GM10248 (cell line): ENCODE measurements at regions of chr1 and their contacts with region 1.

Region 1: DNA sequence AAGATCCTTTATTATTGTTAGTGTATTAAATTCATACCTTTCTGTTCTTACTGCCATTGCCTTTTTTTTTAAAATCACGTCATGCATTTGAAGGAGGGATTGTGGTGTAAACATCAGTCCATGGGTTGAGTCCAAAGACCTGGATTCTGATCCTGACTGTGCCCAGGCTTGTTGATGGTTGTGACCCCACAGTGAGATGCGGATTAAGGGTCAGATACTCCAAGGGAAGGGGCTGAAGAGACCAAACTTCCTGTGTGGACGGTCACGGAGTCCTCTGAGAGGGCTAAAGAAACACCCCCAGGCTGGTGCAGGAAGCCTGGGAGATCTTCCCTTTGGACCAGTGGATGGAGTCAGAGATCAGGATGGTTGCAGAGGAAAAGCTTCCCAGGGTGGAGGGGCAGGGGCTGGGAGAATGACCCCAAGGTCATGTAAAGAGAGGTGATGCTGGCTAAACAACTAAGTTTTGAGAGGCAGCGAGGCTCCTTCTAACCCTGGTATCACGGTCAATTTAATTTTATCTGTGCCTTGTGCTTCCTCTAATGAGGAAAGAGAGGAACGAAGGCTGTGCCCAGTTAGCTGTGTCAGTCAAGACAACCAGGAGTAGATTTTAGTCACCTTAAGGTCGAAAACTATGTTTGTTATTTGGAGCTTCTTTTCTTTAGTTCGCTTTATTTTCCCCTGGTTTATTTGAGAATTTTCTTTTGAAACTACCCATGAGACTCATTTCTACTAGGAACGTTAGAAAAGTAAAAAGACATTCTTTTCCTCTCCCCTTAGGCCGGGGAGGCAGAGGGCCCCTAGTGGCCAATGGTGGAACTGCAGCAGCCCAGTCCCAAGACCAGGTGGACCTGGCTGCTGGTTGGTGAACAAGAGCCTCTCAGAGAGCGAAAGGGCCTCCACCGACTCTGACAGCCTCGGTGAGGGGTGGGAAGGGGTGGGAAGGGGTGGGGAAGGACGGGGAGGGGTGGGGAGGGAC is 8.7 kb upstream of the GPR161 start:
- DNase-seq: peak; percentile 91
- CTCF ChIP-seq: peak; percentile 99

Region 2: GRCh38 chr1:168057921-168058320 is 87.6 kb before region 1 on chr1:
- CTCF ChIA-PET with region 1: no interaction called
- POLR2A ChIA-PET with region 1: no interaction called
- DNase-seq: no peak
- CTCF ChIP-seq: no peak

Region 3: GRCh38 chr1:168161459-168161858 is 16.0 kb after region 1 on chr1:
- CTCF ChIA-PET with region 1: interaction called, 11 read pairs
- POLR2A ChIA-PET with region 1: no interaction called
- DNase-seq: no peak
- CTCF ChIP-seq: no peak

Region 4: GRCh38 chr1:168167806-168168205 is 22.3 kb after region 1 on chr1:
- CTCF ChIA-PET with region 1: interaction called, 20 read pairs
- POLR2A ChIA-PET with region 1: no interaction called
- DNase-seq: no peak
- CTCF ChIP-seq: no peak